Posterior vena cava (tissue), 2 donors: ENCODE measurements at regions of chr6 and their contacts with region 1.

Region 1: GRCh38 chr6:19851241-19852089 is 14.3 kb downstream of the ID4 start:
- DNase-seq: no peak

Region 2: GRCh38 chr6:18742406-18742805 is 1109.1 kb before region 1 on chr6:
- intact Hi-C with region 1: loop called in 1 of 2 experiments (anchors 10 kb)
- DNase-seq: no peak

Region 3: DNA sequence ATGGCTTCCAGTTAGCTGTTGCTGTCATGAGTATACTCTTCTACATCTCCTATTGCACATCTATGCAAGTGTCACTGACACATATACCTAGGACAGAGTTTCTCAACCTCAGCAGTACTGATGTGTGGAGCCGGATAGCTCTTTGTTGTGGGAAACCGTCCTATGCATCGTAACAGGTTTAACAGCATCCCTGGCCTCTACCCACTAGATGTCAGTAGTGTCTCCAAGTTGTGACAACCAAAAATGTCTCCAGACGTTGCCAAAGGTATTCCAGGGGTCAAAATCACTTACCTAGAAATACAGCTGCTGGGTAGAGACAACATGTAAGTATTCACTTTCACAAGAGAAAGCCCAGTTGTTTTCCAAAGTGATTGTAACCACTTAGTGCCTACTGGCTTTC is 826.7 kb before region 1 on chr6:
- intact Hi-C with region 1: loop called in 1 of 2 experiments (anchors 10 kb)
- DNase-seq: no peak

Region 4: DNA sequence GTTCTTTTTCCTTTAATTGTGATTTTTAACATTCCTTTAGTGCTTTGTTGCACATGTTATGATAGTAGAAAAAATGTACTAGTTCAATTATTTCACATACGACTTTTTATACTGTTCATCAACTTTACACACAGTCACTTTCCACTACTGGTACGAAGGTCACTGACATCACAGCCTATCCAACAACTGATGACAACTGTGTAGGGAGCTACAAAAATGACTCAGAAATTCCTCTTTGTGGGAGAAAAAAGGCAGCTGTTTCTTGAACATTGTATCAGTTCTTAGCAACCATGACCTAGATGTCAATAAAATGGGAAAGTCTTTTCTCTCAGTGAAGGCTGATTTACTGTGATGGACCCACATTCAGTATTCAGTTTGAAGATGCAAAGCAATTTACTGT is 21.3 kb before region 1 on chr6:
- intact Hi-C with region 1: no loop called
- DNase-seq: no peak